Aorta (tissue), 5 donors: ENCODE measurements at regions of chrX and their contacts with region 1.

Region 1: DNA sequence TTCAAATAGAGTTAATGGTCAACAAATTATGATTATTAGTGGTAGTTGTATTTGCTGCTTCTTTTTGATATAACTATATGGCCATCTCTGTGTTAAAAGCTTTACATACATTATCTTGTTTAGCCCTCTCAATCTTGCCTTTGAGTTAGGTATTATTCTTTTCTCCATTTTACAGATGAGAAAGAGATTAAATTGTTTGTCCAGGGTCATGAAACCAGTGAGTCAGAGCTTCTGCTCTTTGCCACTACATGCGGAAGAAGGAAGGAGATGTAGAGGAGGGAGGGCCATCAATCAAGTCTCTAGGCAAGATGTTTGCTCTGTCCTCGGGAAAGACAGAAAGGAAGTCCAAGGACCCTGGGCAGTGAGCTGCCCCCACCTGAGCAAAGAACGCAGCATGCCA is 133.7 kb upstream of the IL1RAPL2 start:
- DNase-seq: no peak
- ATAC-seq: no peak
- H3K4me3 ChIP-seq: no peak overlapping the region
- H3K27ac ChIP-seq: no peak overlapping the region
- H3K4me1 ChIP-seq: no peaks in the 10 kb centered on the region
- H3K27me3 ChIP-seq: no peaks in the 10 kb centered on the region

Region 2: DNA sequence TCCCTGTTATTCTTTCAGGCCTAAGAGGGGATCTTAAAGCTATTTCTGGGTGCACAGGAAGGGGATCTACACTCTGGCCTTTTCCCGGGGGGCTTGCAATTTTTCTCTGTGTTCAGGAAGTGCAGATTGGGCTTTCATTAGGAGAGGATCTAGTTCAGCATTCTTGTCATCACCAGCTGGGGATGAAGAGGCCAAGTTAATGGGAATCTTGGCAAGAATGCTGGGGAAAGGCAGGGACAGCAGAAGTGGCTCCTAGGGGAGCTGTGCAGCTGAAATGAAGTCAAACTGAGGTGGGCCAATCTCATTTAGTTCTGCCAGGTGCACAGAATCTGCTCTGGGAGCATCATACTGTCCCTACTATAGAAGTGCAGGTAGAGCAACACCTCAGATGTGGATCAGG is 136.6 kb before region 1 on chrX:
- intact Hi-C with region 1: no loop called
- DNase-seq: no peak
- ATAC-seq: no peak
- H3K4me3 ChIP-seq: no peak overlapping the region
- H3K27ac ChIP-seq: no peak overlapping the region
- H3K4me1 ChIP-seq: no peaks in the 10 kb centered on the region
- H3K27me3 ChIP-seq: no peaks in the 10 kb centered on the region

Region 3: GRCh38 chrX:104459796-104460195 is 27.5 kb after region 1 on chrX:
- intact Hi-C with region 1: no loop called
- DNase-seq: no peak
- ATAC-seq: no peak
- H3K4me3 ChIP-seq: no peak overlapping the region
- H3K27ac ChIP-seq: no peak overlapping the region
- H3K4me1 ChIP-seq: no peaks in the 10 kb centered on the region
- H3K27me3 ChIP-seq: no peaks in the 10 kb centered on the region

Region 4: DNA sequence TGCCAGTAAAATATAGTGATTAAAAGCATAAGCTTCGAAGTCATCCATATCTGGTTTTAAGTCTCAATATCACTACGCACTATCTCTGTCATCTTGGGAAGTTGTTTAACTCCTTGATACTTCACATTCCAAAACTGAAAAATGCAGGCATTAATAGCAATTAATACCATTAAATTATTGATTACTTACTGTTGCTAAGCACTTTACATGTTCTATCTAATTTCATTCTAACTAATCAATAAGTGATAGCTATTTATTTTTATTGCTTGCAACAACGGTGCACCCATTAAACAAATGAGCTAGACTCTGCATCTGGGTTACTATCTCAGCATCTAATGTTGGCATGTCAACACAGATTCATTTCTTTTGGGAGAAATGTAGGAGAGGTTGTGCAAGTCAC is 66.0 kb after region 1 on chrX:
- intact Hi-C with region 1: loop called in 1 of 2 experiments (anchors 10 kb)
- DNase-seq: no peak
- ATAC-seq: no peak
- H3K4me3 ChIP-seq: no peak overlapping the region
- H3K27ac ChIP-seq: no peak overlapping the region
- H3K4me1 ChIP-seq: no peaks in the 10 kb centered on the region
- H3K27me3 ChIP-seq: no peaks in the 10 kb centered on the region

Region 5: GRCh38 chrX:104565791-104566680 is 133.8 kb after region 1 on chrX and contains the start of gene IL1RAPL2:
- intact Hi-C with region 1: no loop called
- DNase-seq: no peak
- ATAC-seq: no peak
- H3K4me3 ChIP-seq: no peak within 1 kb of the TSS
- H3K27ac ChIP-seq: no peak within 1 kb of the TSS
- H3K4me1 ChIP-seq: no peaks in the 10 kb centered on the region
- H3K27me3 ChIP-seq: no peaks in the 10 kb centered on the region
- total RNA-seq, gene IL1RAPL2: not detected